ENCODE measurements at regions of chr1 and their contacts with region 1.

Region 1: DNA sequence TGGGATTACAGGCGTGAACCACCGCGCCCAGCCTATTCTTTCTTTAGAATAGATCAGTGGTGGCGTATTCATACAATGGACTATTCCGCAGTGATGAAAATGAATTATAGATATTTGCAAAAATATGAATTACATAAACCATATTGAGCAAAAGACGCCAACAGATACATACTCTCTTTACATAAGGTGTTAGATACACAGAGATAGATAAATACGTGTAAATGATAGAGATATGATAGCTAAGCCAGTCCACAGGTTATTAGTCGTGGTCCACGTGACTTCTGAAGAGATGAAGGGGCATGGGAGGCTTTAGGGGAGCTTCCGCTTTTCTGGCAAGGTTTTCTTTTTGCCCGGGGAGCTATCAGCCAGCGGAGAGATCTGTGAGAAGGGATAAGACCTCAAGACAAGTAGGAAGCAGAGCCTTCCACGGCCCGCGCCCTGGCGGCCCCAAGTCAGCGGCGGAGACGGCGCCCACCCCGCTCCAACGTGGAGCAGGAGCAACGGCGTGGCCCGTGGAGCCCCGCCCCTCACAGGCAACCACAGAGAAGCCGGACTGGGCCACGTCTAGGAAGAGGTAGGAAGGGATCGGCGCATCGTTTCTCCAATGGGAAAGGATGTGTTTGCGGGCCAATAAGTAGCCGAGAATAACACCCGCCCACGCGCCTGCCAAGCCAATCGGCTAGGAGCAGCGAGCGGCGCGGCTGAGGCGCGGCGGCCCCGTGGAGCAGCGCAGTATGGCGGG is at the start of gene MSTO1:
- DNase-seq: peak; percentile 94 to 96 (median 95)
- H3K4me3 ChIP-seq: peak within 1 kb of the TSS; percentile 58
- H3K27ac ChIP-seq: peak within 1 kb of the TSS in 1 of 2 donors; percentile 66
- H3K4me1 ChIP-seq: no peaks in the 10 kb centered on the region
- H3K27me3 ChIP-seq: no peaks in the 10 kb centered on the region
- CTCF ChIP-seq: no peak
- EP300 ChIP-seq: no peak
- POLR2A ChIP-seq: no peak
- total RNA-seq, gene MSTO1: 13.8 to 96.2 (median 51.5) TPM

Region 2: GRCh38 chr1:155562581-155563376 is 46.9 kb before region 1 on chr1 and contains the start of gene ASH1L:
- intact Hi-C with region 1: loop called in 1 of 4 experiments (anchors 5 kb)
- DNase-seq: peak; percentile 93 to 95 (median 94)
- H3K4me3 ChIP-seq: peak within 1 kb of the TSS; percentile 77
- H3K27ac ChIP-seq: peak within 1 kb of the TSS; percentile 97 to 99
- H3K4me1 ChIP-seq: peaks cover 4% of the 10 kb centered on the region
- H3K27me3 ChIP-seq: no peaks in the 10 kb centered on the region
- CTCF ChIP-seq: peak in 2 of 3 donors; percentile 21 to 53
- EP300 ChIP-seq: no peak
- POLR2A ChIP-seq: peak; percentile 85
- total RNA-seq, gene ASH1L: 58.6 to 98.4 (median 77.5) TPM

Region 3: GRCh38 chr1:155801149-155801548 is 191.5 kb after region 1 on chr1:
- intact Hi-C with region 1: no loop called
- DNase-seq: no peak
- H3K4me3 ChIP-seq: no peak overlapping the region
- H3K27ac ChIP-seq: no peak overlapping the region
- H3K4me1 ChIP-seq: no peaks in the 10 kb centered on the region
- H3K27me3 ChIP-seq: no peaks in the 10 kb centered on the region
- CTCF ChIP-seq: no peak
- EP300 ChIP-seq: no peak
- POLR2A ChIP-seq: no peak

Measured in ovary (tissue), 10 donors.